Activated CD4-positive, alpha-beta memory T cell treated with anti-CD3 and anti-CD28 coated beads for 36 hours (primary cell): ENCODE measurements at regions of chr5 and their contacts with region 1.

Region 1: DNA sequence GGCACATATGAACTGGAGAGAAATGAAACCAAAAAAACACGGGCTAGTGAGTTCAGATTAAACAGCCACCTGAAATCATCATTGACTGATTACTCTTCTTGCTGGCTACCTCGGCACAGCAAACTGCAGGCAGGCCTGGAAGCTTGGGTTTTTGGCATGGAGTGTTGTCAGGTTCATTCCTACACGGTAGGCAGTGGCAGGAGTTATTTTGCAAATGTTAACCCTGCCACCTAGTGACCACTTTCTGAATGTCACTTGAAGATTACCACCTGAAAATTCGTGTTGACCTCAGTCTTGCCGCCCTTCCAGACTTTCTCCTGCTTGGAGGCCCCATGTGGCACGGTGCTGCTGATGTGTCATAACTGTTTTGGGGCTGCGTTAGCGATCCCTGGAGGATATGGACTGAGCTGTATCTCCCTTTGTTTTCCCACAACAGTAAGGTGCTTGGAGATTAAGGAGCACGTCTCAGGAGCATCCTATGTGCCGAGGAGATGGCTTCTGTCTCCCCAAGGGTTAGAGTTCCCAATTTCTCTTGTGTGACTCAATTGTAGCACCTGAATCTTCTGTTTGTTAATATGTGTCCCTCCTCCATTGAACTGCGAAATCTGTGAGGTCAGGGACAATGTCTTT is 12.7 kb upstream of the CD180 start:
- DNase-seq: peak; percentile 67
- H3K4me3 Mint-ChIP-seq: no peak overlapping the region
- H3K27ac Mint-ChIP-seq: peak overlapping the region; percentile 46
- H3K4me1 Mint-ChIP-seq: peaks cover 57% of the 10 kb centered on the region
- H3K27me3 Mint-ChIP-seq: no peaks in the 10 kb centered on the region

Region 2: GRCh38 chr5:66306105-66306843 is 903.0 kb before region 1 on chr5:
- CTCF ChIA-PET with region 1: no interaction called
- POLR2A ChIA-PET with region 1: no interaction called
- intact Hi-C with region 1: loop called (anchors 5 kb)
- DNase-seq: peak; percentile 45
- H3K4me3 Mint-ChIP-seq: no peak overlapping the region
- H3K27ac Mint-ChIP-seq: no peak overlapping the region
- H3K4me1 Mint-ChIP-seq: peaks cover 3% of the 10 kb centered on the region
- H3K27me3 Mint-ChIP-seq: peaks cover 10% of the 10 kb centered on the region

Region 3: DNA sequence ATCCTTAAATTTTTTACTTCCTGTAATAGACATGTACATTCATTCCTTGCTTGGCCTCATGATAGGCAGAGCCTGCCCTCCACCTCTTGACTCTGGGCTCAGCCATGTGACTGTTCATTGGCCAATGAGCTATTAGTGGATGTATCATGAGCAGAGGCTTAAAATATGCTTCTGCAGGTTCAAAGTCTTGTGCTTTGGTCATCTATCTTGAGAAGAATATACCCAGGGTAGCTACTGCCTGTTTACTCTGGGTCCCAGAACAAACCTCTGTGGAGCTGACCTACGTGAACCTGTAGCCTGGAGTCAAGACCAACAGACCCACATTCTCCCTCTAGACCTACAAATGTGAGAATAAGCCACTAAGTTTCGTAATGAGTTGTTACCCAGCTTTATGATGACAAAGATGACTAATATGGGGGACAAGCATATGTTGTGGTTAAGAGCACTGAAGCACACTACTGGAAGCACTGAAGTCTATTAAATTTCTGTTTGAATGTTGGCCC is 368.7 kb before region 1 on chr5:
- CTCF ChIA-PET with region 1: no interaction called
- POLR2A ChIA-PET with region 1: interaction called, 4 read pairs
- intact Hi-C with region 1: loop called (anchors 2 kb)
- DNase-seq: peak; percentile 60
- H3K4me3 Mint-ChIP-seq: no peak overlapping the region
- H3K27ac Mint-ChIP-seq: peak overlapping the region; percentile 88
- H3K4me1 Mint-ChIP-seq: peaks cover 52% of the 10 kb centered on the region
- H3K27me3 Mint-ChIP-seq: peaks cover 25% of the 10 kb centered on the region

Region 4: DNA sequence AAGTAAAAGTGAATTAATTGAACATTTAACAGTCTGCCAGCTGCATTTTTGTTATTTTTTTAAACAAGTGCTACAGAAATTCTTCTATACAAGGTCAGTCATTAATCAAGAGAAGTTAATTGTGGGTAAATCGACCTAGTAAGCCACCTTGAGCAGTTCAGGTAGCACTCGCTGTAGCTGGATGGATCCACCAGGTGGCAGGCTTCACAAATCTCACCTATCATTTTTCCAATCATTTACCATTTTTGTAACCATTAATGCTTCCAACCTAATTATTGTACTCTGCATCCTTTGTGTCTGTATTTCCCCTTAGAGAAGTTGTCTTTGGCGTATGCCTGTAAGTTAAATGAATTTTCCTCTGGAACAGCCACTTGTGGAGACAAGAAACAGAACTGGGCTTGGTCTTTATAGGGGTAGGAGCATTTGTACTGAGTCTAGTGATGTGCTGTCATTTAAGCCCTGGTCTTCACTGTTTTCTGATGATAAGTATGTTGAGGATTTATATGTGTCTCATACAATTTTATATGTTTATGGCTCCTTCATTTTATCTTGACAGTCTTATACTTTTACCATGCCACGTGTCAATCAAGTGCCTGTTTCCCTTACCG is 52.2 kb before region 1 on chr5:
- CTCF ChIA-PET with region 1: interaction called, 363 read pairs
- POLR2A ChIA-PET with region 1: interaction called, 104 read pairs
- intact Hi-C with region 1: loop called (anchors 1 kb)
- DNase-seq: peak; percentile 65
- H3K4me3 Mint-ChIP-seq: no peak overlapping the region
- H3K27ac Mint-ChIP-seq: peak overlapping the region; percentile 55
- H3K4me1 Mint-ChIP-seq: peaks cover 42% of the 10 kb centered on the region
- H3K27me3 Mint-ChIP-seq: no peaks in the 10 kb centered on the region

Region 5: DNA sequence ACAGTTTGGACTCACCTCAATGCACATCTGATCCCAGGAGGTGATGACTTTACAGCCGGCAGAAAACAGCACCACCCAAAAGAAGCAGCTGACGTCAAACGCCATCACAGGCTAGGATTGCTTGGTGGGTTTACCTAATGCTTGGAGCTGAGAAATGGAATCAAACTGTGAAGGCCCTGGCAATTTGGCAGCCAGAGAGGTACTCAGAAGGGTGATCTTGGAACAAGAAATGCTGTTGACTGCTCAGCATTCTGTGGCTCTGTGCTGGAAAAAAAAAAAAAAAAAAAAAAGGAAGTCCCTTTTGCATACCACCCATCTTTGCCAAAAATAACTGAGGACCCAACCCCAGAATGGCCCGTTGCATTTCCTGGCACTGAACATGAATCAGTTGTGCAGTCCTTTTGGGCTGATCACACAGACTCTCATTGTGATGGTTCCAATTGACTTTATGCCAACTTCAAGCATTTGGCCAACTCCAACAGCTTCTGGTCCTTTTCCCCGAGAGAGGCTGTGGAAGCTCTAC is 12.7 kb before region 1 on chr5 and contains the start of gene CD180:
- CTCF ChIA-PET with region 1: interaction called, 5 read pairs
- POLR2A ChIA-PET with region 1: no interaction called
- intact Hi-C with region 1: loop called (anchors 1 kb)
- DNase-seq: no peak
- H3K4me3 Mint-ChIP-seq: no peak within 1 kb of the TSS
- H3K27ac Mint-ChIP-seq: peak within 1 kb of the TSS; percentile 15
- H3K4me1 Mint-ChIP-seq: peaks cover 33% of the 10 kb centered on the region
- H3K27me3 Mint-ChIP-seq: no peaks in the 10 kb centered on the region
- total RNA-seq, gene CD180: 0.07 to 0.21 TPM